Posterior vena cava (tissue), 2 donors: ENCODE measurements at regions of chr12 and their contacts with region 1.

Region 1: DNA sequence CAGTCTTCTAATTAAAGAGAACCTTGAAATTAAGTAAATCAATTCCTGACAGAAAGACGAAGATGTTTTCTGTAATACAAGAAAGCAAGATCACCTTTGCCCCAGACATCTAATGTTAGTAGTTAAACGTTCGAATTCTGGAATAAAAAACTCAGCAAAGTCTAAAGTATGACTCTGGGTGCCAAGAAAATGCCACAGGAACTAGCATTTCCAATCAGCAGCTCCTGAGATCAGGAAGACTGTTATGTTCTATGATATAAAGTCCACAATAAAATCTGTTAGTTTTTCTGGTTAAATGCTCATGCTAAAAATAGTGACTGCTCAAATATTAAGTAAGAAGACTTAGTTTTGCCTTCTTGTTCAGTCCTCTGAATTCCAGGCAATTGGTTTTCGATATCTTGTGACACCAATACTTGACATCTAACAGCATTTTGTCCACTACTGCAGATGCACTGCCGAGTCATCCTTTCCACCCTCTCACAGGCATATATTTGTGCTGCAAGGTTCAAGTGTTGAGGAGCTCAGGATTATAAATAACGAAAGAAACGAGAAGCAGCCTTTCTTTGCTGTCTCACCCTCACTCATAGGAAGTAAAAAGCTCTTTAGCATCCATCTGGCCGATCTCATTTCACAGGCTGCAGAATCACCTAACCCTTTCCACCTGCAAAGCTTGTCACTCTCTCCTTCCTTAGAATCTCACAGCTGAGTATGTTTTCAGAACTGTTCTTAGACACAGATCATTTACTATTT is 32.0 kb downstream of the SSH1 start:
- DNase-seq: no peak

Region 2: GRCh38 chr12:108856428-108857157 is 31.2 kb after region 1 on chr12:
- intact Hi-C with region 1: loop called in 1 of 2 experiments (anchors 1 kb)
- DNase-seq: peak; percentile 93